A673 (cell line): ENCODE measurements at regions of chr3 and their contacts with region 1.

Region 1: DNA sequence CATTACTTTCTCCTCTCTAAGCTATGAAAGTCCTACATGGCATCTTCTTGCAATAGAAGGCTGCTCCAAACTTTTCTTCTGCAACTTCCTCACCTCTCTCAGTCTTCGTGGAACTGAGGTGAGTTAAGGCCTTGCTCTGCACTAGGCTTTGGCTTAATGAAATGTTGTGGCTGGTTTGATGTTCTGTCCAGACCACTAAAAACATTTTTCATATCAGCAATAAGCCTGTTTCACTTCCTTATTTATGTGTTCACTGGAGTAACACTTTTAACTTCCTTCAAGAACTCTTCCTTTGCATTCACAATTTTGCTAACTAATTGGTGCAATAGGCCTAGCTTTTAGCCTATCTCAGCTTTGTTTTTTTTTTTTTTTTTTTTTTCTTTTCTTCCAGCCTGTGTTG is 335.3 kb upstream of the NECTIN3 start:
- DNase-seq: no peak
- H3K4me3 ChIP-seq: no peak overlapping the region
- H3K27ac ChIP-seq: no peak overlapping the region
- H3K4me1 ChIP-seq: no peaks in the 10 kb centered on the region
- H3K27me3 ChIP-seq: no peaks in the 10 kb centered on the region
- CTCF ChIP-seq: no peak

Region 2: DNA sequence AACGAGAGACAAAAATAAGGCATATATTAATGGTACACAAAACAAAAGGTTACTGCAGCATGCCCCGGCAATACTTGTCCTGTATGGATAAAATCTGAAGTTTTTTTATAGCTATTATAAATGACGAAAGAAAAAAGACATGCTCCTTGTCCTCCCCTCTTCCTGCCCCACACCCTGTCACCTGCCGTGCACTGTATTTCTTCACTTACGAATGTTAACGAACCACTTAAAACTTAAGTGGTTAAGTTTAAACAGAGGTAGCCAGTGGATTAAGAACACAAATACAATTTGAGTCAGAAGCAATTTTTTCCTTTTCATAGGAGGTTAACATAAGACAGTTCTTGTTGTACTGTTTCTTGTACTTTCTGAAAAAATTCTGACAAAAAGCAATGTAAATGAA is 463.8 kb before region 1 on chr3:
- CTCF ChIA-PET with region 1: no interaction called
- POLR2A ChIA-PET with region 1: interaction called, 11 read pairs
- intact Hi-C with region 1: no loop called
- DNase-seq: no peak
- H3K4me3 ChIP-seq: no peak overlapping the region
- H3K27ac ChIP-seq: no peak overlapping the region
- H3K4me1 ChIP-seq: no peaks in the 10 kb centered on the region
- H3K27me3 ChIP-seq: no peaks in the 10 kb centered on the region
- CTCF ChIP-seq: no peak